ENCODE measurements at regions of chr10 and their contacts with region 1.

Region 1: DNA sequence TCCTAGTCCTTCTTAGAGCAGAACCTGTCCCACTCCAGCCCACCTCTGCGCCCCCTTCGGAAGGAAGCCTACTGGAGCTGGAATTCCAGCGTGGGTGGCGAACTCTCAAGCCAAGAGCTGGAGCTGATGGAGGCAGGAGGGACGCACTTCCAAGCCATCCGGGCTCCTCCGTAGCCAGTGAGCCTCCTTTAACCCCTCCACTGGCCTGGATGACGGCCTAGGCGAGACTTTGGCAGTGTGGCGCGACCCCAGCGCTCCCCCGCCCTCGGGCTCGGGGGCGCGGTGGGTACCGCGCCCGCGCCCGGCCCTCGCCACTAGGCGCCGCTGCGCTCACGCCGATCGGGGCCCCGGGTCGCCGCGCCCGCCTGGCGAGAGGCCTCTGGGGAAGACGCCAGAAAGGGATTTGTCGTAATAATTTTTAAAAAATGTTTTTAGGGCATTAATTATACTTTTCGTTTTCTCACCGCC is 5.1 kb upstream of the EMX2 start:
- DNase-seq: peak in 1 of 2 donors; percentile 44
- ATAC-seq: peak; percentile 54 to 80 (median 66)
- H3K4me3 ChIP-seq: peak overlapping the region in 5 of 10 donors; percentile 12 to 25 (median 19)
- H3K27ac ChIP-seq: no peak overlapping the region
- H3K4me1 ChIP-seq: peaks cover 4 to 48% (median 29%) of the 10 kb centered on the region in 9 donors
- H3K27me3 ChIP-seq: peaks cover 59 to 100% (median 99%) of the 10 kb centered on the region in 7 donors
- CTCF ChIP-seq: peak; percentile 32 to 83 (median 63)

Region 2: GRCh38 chr10:117137031-117137910 is 400.2 kb before region 1 on chr10:
- intact Hi-C with region 1: no loop called
- DNase-seq: no peak
- ATAC-seq: peak in 5 of 8 donors; percentile 33 to 53 (median 47)
- H3K4me3 ChIP-seq: peak overlapping the region; percentile 25 to 49 (median 40)
- H3K27ac ChIP-seq: no peak overlapping the region
- H3K4me1 ChIP-seq: peaks cover 7 to 45% (median 37%) of the 10 kb centered on the region in 9 donors
- H3K27me3 ChIP-seq: peaks cover 53 to 99% (median 99%) of the 10 kb centered on the region in 7 donors
- CTCF ChIP-seq: no peak

Region 3: GRCh38 chr10:117581961-117582360 is 44.5 kb after region 1 on chr10:
- intact Hi-C with region 1: no loop called
- DNase-seq: no peak
- ATAC-seq: no peak
- H3K4me3 ChIP-seq: no peak overlapping the region
- H3K27ac ChIP-seq: no peak overlapping the region
- H3K4me1 ChIP-seq: no peaks in the 10 kb centered on the region
- H3K27me3 ChIP-seq: peaks cover 0 to 37% (median 1%) of the 10 kb centered on the region in 7 donors
- CTCF ChIP-seq: no peak

Region 4: GRCh38 chr10:118106426-118106825 is 569.0 kb after region 1 on chr10:
- intact Hi-C with region 1: loop called in 3 of 10 experiments (anchors 5 to 10 kb)
- DNase-seq: peak in 1 of 2 donors; percentile 10
- ATAC-seq: peak in 1 of 8 donors; percentile 39
- H3K4me3 ChIP-seq: no peak overlapping the region
- H3K27ac ChIP-seq: no peak overlapping the region
- H3K4me1 ChIP-seq: no peaks in the 10 kb centered on the region
- H3K27me3 ChIP-seq: peaks cover 0 to 4% (median 0%) of the 10 kb centered on the region in 7 donors
- CTCF ChIP-seq: peak in 7 of 9 donors; percentile 21 to 56 (median 48)

Region 5: GRCh38 chr10:118112543-118113125 is 575.2 kb after region 1 on chr10:
- intact Hi-C with region 1: loop called in 3 of 10 experiments (anchors 5 to 10 kb)
- DNase-seq: no peak
- ATAC-seq: no peak
- H3K4me3 ChIP-seq: no peak overlapping the region
- H3K27ac ChIP-seq: no peak overlapping the region
- H3K4me1 ChIP-seq: peaks cover 0 to 16% (median 0%) of the 10 kb centered on the region in 9 donors
- H3K27me3 ChIP-seq: no peaks in the 10 kb centered on the region
- CTCF ChIP-seq: no peak